Activated CD8-positive, alpha-beta memory T cell treated with anti-CD3 and anti-CD28 coated beads, Interleukin-2, amount 10 ng/mL, durations not matched to agents 7 days and 5 days (primary cell): ENCODE measurements at regions of chr3 and their contacts with region 1.

Region 1: DNA sequence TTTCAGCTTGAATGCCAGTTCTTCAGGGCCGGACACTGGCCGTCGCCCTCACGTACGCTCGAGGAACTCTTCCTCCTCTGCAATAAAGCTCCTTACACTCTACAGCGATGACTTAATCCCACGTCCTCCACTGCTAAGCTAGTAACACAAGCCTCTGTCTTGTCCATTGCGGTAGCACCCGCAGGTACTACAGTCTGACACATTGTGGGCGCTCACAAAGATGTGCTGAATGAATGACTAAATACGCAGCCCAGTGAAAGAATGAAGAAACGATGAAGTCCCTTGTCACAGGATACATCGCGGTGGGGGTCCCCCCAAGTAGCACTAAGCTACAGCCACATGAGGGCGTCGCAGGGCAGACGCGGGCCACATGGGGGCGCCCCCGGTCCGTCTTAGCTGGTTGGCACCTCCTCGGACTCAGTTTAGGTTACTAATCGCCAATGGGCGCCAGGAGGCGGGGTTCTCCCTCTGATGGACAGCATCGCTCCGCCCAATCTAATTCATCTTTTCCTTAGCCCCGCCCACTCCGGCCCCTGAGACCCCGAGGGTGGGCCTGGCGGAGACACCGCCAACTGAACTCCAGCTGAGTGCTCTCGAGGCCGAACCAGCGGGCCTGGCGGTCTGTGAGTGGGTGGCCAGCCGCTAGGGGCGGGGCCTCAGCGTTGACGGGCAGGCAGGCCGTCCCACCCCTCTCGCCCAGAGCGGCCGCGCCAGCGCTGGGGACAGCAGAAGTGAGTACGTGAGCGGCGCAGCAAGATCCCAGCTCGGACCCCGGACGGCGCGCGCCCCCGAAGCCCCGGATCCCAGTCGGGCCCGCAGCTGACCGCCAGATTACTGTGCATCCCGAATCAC is at the start of gene EPHB3:
- DNase-seq: peak; percentile 94
- ATAC-seq: peak; percentile 89
- H3K4me3 Mint-ChIP-seq: peak within 1 kb of the TSS; percentile 23
- H3K27ac Mint-ChIP-seq: no peak within 1 kb of the TSS
- H3K4me1 Mint-ChIP-seq: peaks cover 9% of the 10 kb centered on the region
- H3K27me3 Mint-ChIP-seq: peaks cover 73% of the 10 kb centered on the region
- total RNA-seq, gene EPHB3: not detected

Region 2: GRCh38 chr3:184574515-184575417 is 13.5 kb after region 1 on chr3:
- CTCF ChIA-PET with region 1: interaction called, 13 read pairs
- DNase-seq: no peak
- ATAC-seq: no peak
- H3K4me3 Mint-ChIP-seq: no peak overlapping the region
- H3K27ac Mint-ChIP-seq: no peak overlapping the region
- H3K4me1 Mint-ChIP-seq: no peaks in the 10 kb centered on the region
- H3K27me3 Mint-ChIP-seq: peaks cover 27% of the 10 kb centered on the region

Region 3: GRCh38 chr3:184712248-184713039 is 151.2 kb after region 1 on chr3:
- CTCF ChIA-PET with region 1: interaction called, 15 read pairs
- DNase-seq: no peak
- ATAC-seq: peak; percentile 59
- H3K4me3 Mint-ChIP-seq: peak overlapping the region; percentile 75
- H3K27ac Mint-ChIP-seq: peak overlapping the region; percentile 79
- H3K4me1 Mint-ChIP-seq: peaks cover 29% of the 10 kb centered on the region
- H3K27me3 Mint-ChIP-seq: peaks cover 27% of the 10 kb centered on the region

Region 4: GRCh38 chr3:184748219-184749135 is 187.2 kb after region 1 on chr3:
- CTCF ChIA-PET with region 1: interaction called, 12 read pairs
- DNase-seq: peak; percentile 42
- ATAC-seq: peak; percentile 53
- H3K4me3 Mint-ChIP-seq: no peak overlapping the region
- H3K27ac Mint-ChIP-seq: no peak overlapping the region
- H3K4me1 Mint-ChIP-seq: peaks cover 10% of the 10 kb centered on the region
- H3K27me3 Mint-ChIP-seq: peaks cover 6% of the 10 kb centered on the region

Region 5: GRCh38 chr3:184800349-184800930 is 239.2 kb after region 1 on chr3:
- CTCF ChIA-PET with region 1: interaction called, 11 read pairs
- DNase-seq: no peak
- ATAC-seq: no peak
- H3K4me3 Mint-ChIP-seq: no peak overlapping the region
- H3K27ac Mint-ChIP-seq: no peak overlapping the region
- H3K4me1 Mint-ChIP-seq: peaks cover 9% of the 10 kb centered on the region
- H3K27me3 Mint-ChIP-seq: peaks cover 40% of the 10 kb centered on the region